BJ (cell line): ENCODE measurements at regions of chr4 and their contacts with region 1.

Region 1: DNA sequence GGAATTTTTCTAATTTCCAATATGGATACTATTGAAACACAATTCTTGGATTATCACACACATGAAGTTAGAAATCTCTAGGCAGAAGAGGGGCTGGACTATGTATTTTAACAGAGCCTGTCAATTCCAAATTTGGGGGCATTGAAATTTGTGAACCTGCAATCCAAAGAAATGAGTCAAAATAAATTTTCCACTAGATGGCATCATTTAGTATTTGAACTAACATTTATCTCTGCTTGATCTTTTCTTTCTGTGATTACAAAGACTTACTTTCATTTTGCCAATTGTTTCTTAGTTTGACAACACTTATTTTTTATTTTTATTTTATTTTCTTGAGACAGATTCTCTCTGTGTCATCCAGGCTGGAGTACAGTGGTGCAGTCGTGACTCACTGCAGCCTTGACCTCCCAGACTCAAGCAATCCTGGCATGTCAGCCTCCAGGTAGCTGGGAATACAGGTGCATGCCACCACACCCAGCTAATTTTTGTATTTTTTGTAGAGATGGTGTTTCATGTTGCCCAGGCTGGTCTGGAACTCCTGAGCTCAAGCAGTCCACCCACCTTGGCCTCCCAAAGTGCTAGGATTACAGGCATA is 2.7 kb upstream of the PYURF start:
- DNase-seq: no peak
- H3K4me3 ChIP-seq: no peak overlapping the region
- H3K27me3 ChIP-seq: no peaks in the 10 kb centered on the region
- CTCF ChIP-seq: peak; percentile 27; the same call in 1 of the 2 replicates

Region 2: GRCh38 chr4:88442703-88443191 is 83.6 kb before region 1 on chr4:
- CTCF ChIA-PET with region 1: no interaction called
- POLR2A ChIA-PET with region 1: no interaction called
- DNase-seq: no peak
- H3K4me3 ChIP-seq: no peak overlapping the region
- H3K27me3 ChIP-seq: no peaks in the 10 kb centered on the region
- CTCF ChIP-seq: no peak

Region 3: DNA sequence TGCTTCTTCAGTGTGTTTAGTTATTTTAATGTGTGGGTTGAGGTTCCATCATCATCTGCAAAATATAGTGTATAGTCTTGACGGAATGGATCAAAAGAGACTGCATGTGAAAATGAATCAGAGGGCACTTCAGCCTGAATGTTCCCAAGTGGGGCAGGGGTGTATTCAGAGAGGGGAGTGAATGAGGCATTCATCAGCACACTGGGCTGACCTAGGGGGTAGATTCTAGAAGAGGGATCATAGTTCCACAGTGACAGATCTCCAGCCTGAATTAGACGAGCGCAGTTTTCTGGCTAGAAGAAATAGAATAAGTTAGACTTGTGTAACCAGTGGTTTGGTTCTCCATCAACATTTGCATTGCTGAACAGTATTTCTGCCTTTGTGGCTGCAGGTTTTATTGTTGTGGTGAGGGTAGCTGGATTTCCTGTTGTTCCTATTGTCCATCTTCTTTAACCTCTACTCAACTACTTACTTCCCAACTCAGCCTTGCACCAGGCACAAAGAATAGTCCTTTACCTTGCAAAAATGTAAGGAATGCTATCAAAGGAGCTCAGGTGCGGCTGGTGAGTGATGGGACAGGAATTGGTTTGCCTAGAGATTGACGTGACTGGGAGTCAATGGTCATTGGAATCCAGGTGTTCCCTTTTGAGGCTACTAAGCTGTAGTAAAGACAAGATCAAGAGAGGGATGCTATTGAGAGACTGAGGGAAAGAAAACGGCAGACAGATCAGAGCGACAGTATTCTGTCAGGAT is 120.4 kb after region 1 on chr4:
- CTCF ChIA-PET with region 1: no interaction called
- POLR2A ChIA-PET with region 1: interaction called, 12 read pairs
- DNase-seq: no peak
- H3K4me3 ChIP-seq: no peak overlapping the region
- H3K27me3 ChIP-seq: no peaks in the 10 kb centered on the region
- CTCF ChIP-seq: no peak